ENCODE measurements at regions of chr9 and their contacts with region 1.

Region 1: DNA sequence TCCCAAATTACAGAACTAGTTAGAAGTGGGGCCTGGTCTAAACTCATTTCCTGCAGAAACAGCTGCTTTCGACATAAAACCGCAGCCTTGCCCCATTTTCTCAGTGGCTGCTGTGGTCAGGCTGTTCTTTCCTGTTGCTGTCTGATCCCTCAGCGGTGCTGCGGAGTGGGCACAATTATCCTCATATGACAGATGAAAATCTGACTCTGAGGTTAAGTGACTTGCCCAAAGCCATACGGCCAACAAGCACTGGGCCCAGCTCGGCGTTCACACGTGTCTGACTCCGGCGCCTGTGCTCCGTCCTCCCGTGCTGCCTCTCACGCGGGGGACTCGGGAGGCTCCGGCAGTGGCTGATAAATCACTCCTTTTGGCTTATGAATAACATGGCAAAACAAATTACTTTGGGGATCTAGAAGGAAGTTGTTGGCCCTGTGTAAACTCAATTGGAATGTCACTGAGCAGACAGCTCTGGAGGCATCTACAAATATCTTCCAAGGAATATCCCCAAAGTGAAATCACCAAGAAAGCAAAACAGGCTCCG is 142.6 kb upstream of the LMX1B start:
- DNase-seq: peak; percentile 89
- H3K4me3 Mint-ChIP-seq: peak overlapping the region; percentile 59
- H3K27ac Mint-ChIP-seq: peak overlapping the region; percentile 95
- H3K4me1 Mint-ChIP-seq: peaks cover 76% of the 10 kb centered on the region
- H3K27me3 Mint-ChIP-seq: peaks cover 29% of the 10 kb centered on the region

Region 2: DNA sequence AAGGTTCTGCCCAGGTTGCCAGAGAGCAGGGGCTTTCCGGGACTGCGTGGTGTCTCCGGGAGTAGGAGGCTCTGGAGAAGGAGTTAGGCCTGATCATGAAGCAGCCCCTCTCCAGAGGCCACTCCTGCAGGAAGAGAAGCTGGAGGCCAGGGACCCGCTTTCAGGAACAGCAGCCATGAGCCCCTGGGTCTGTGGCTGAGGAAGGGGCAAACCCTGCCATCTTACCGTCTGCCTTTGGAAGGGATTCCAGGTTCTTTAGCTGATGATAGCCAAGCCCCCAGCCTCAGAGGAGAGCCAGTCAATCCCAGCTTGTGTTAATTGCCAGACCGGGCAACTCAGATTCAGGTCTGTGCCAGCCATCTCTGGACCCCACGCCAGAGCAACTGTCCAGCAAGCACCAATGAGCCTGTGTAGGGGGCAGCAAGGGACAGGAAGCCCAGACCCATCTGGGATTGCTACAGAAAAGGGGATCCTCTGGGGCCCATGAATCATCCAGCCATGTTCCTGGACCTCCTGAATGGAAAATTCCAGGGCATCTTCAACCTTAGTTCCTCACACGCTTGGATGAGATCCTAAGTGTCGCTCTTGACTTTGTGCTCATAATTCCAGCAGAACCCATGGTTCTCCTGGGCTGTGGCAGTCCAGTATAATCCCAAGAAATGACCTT is 187.2 kb before region 1 on chr9:
- CTCF ChIA-PET with region 1: no interaction called
- POLR2A ChIA-PET with region 1: no interaction called
- DNase-seq: no peak
- H3K4me3 Mint-ChIP-seq: no peak overlapping the region
- H3K27ac Mint-ChIP-seq: no peak overlapping the region
- H3K4me1 Mint-ChIP-seq: no peaks in the 10 kb centered on the region
- H3K27me3 Mint-ChIP-seq: peaks cover 13% of the 10 kb centered on the region

Region 3: GRCh38 chr9:126366366-126367011 is 104.7 kb before region 1 on chr9:
- CTCF ChIA-PET with region 1: no interaction called
- POLR2A ChIA-PET with region 1: no interaction called
- DNase-seq: no peak
- H3K4me3 Mint-ChIP-seq: no peak overlapping the region
- H3K27ac Mint-ChIP-seq: no peak overlapping the region
- H3K4me1 Mint-ChIP-seq: no peaks in the 10 kb centered on the region
- H3K27me3 Mint-ChIP-seq: no peaks in the 10 kb centered on the region

Region 4: GRCh38 chr9:126398403-126399058 is 72.6 kb before region 1 on chr9:
- CTCF ChIA-PET with region 1: interaction called, 18 read pairs
- POLR2A ChIA-PET with region 1: no interaction called
- DNase-seq: peak; percentile 72
- H3K4me3 Mint-ChIP-seq: peak overlapping the region; percentile 10
- H3K27ac Mint-ChIP-seq: peak overlapping the region; percentile 72
- H3K4me1 Mint-ChIP-seq: peaks cover 81% of the 10 kb centered on the region
- H3K27me3 Mint-ChIP-seq: peaks cover 4% of the 10 kb centered on the region

Region 5: DNA sequence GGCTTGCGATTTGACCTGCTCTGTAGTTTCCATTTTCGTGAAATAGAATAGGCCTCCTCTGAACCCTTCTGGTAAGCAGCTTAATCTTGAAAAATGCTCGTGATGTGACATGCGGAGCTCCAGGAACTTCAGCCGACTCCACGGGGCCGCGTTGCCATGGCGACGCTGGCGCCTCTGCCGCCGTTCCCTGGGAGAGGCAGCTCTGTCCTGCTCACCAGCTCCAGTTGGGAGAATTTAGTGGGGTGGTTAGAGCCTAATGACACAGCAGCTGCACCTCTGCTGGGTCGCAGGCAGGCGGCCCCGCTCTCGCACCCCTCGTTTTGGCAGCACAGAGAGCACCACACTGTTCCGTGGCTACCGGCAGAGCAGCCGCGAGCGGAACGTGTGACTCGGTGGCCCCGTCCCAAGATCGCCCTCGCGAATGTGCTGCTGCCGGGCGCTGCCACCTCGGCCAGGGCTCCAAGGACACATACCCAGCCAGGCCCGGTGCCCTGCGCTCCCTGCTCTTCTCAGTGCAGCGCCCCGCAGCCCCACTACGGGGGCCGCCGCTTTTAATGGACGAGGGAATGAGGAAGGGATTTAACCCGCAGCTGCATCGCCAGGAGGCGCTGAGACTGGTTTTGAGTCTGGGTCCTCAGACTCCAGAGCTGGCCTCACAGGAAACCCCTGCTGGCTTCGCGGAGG is 11.3 kb after region 1 on chr9:
- CTCF ChIA-PET with region 1: interaction called, 15 read pairs
- POLR2A ChIA-PET with region 1: no interaction called
- DNase-seq: no peak
- H3K4me3 Mint-ChIP-seq: no peak overlapping the region
- H3K27ac Mint-ChIP-seq: no peak overlapping the region
- H3K4me1 Mint-ChIP-seq: peaks cover 22% of the 10 kb centered on the region
- H3K27me3 Mint-ChIP-seq: peaks cover 4% of the 10 kb centered on the region

Region 6: DNA sequence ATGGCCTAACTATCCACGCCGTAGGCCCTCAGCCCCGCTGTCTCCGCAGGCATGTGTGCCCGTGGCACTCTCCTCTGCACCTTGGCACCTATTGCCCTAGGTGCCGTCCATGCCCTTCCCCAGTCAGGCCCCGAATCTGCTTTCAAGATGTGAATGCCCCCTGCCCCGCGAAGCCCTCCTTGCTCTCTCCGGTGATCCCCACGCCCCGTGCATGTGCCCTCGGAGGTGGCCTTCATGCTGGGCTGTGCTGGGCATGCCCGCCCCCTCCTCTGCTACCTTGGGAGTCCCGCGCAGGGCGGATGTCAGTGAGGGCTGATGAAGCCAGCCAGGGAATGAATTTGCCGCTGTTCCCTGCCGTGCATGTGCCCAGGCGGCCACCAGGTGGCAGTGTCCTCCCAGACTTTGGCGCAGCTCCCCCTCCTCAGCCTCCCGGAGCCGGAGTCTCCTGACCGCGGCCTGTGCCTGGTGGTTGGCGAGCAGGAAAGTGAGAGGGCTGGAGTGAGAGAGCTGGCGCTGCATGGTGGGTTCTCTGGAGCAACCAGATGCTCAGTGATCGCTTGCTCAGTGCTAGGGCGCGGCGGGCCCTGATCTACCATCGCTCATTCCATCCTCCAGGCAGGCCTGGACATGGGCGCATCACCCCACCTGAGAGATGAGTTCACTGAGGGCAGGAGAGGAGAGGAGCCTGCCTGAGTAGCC is 29.7 kb after region 1 on chr9:
- CTCF ChIA-PET with region 1: interaction called, 10 read pairs
- POLR2A ChIA-PET with region 1: no interaction called
- DNase-seq: peak; percentile 68
- H3K4me3 Mint-ChIP-seq: no peak overlapping the region
- H3K27ac Mint-ChIP-seq: no peak overlapping the region
- H3K4me1 Mint-ChIP-seq: peaks cover 7% of the 10 kb centered on the region
- H3K27me3 Mint-ChIP-seq: peaks cover 11% of the 10 kb centered on the region